Activated naive CD4-positive, alpha-beta T cell treated with anti-CD3 and anti-CD28 coated beads for 36 hours (primary cell): ENCODE measurements at regions of chr18 and their contacts with region 1.

Region 1: DNA sequence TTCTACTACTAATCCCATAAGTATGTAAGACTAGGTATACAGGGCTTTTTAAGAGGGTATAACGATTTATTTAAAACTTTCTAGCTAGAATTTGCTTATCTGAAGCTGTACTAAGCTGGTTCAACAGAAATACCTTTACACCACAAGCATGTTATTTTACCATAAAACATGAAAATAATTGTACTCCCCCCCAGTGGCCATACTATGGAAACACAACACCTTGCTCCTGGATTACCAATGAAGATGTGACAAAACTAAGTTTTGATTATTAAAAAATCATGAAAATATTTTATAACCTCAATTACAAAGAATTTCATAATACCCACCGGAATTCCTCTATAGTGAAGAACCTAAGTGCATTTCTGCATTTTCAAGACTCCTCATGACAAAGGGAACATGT is 27.3 kb downstream of the LPIN2 start:
- DNase-seq: no peak
- H3K4me3 Mint-ChIP-seq: no peak overlapping the region
- H3K27ac Mint-ChIP-seq: no peak overlapping the region
- H3K4me1 Mint-ChIP-seq: peaks cover 80% of the 10 kb centered on the region
- H3K27me3 Mint-ChIP-seq: no peaks in the 10 kb centered on the region

Region 2: DNA sequence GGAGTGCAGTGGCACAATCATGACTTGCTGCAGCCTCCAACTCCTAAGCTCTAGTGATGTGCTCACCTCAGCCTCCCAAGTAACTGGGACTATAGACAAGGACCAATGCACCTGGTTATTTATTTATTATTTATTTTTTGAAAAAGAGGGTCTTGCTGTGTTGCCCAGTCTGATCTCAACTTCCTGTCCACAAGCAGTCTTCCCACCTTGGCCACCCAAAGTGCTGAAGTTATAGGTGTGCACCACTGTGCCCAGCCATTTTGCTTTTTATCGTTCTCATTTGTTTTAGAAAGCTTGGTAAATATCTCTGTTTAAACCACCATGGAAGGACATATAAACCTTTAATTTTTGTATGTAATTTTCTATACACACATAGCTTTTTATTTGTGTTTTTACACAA is 255.9 kb before region 1 on chr18:
- CTCF ChIA-PET with region 1: no interaction called
- intact Hi-C with region 1: no loop called
- DNase-seq: no peak
- H3K4me3 Mint-ChIP-seq: no peak overlapping the region
- H3K27ac Mint-ChIP-seq: no peak overlapping the region
- H3K4me1 Mint-ChIP-seq: peaks cover 14% of the 10 kb centered on the region
- H3K27me3 Mint-ChIP-seq: no peaks in the 10 kb centered on the region

Region 3: GRCh38 chr18:2774669-2775068 is 211.0 kb before region 1 on chr18:
- CTCF ChIA-PET with region 1: no interaction called
- intact Hi-C with region 1: loop called (anchors 2 kb)
- DNase-seq: no peak
- H3K4me3 Mint-ChIP-seq: no peak overlapping the region
- H3K27ac Mint-ChIP-seq: no peak overlapping the region
- H3K4me1 Mint-ChIP-seq: peaks cover 6% of the 10 kb centered on the region
- H3K27me3 Mint-ChIP-seq: no peaks in the 10 kb centered on the region

Region 4: DNA sequence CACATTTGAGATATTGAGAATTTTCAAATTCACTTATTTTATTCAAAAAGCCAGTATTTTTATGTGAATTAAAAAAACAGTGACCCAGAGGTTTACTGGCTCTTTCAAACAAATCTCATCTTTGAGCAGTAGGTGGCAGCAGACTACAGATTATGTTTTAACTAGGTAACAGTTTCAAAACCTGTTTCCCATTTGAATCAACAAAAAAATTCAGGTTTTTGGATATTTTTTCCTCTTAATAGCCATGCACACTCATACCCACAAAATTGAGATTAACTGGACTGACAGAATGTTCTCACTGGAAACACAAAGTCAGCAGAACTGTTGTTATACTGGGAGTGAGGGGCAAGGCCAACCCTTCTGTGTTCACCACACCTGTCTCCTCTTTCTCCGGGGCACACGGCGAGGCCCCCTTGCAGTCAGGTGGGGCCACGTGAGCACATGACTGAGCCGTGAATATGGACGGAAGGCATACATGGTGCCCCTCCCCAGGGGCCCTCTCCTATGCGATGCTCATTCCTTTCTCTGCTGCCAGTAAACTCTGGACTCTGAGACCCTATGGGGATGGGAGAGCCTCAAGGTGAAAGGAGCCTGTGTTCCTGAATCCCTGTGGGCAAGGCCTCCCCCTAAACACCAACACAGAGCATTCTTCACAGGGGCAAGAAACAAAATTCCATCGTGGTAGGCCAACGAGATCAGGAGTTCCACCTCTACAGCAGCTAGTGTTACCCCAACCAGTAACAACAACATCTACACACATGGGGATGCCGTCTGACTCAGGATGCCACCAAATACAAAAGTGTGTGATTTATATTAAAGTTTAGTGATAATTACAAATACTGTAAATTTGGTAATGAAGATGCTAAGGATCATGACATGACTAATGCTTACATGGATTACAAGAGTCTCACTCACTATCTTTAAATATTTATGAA is 53.1 kb before region 1 on chr18:
- CTCF ChIA-PET with region 1: interaction called, 101 read pairs
- intact Hi-C with region 1: loop called (anchors 1 kb)
- DNase-seq: peak; percentile 68
- H3K4me3 Mint-ChIP-seq: no peak overlapping the region
- H3K27ac Mint-ChIP-seq: peak overlapping the region; percentile 94
- H3K4me1 Mint-ChIP-seq: peaks cover 35% of the 10 kb centered on the region
- H3K27me3 Mint-ChIP-seq: no peaks in the 10 kb centered on the region

Region 5: GRCh38 chr18:2958819-2959298 is 26.8 kb before region 1 on chr18:
- CTCF ChIA-PET with region 1: interaction called, 25 read pairs
- intact Hi-C with region 1: loop called (anchors 1 kb)
- DNase-seq: peak; percentile 44
- H3K4me3 Mint-ChIP-seq: peak overlapping the region; percentile 53
- H3K27ac Mint-ChIP-seq: peak overlapping the region; percentile 100
- H3K4me1 Mint-ChIP-seq: peaks cover 88% of the 10 kb centered on the region
- H3K27me3 Mint-ChIP-seq: no peaks in the 10 kb centered on the region

Region 6: GRCh38 chr18:3037423-3037915 is 51.8 kb after region 1 on chr18:
- CTCF ChIA-PET with region 1: no interaction called
- intact Hi-C with region 1: no loop called
- DNase-seq: no peak
- H3K4me3 Mint-ChIP-seq: no peak overlapping the region
- H3K27ac Mint-ChIP-seq: no peak overlapping the region
- H3K4me1 Mint-ChIP-seq: peaks cover 18% of the 10 kb centered on the region
- H3K27me3 Mint-ChIP-seq: no peaks in the 10 kb centered on the region

Region 7: GRCh38 chr18:3129053-3129864 is 143.6 kb after region 1 on chr18:
- CTCF ChIA-PET with region 1: interaction called, 28 read pairs
- intact Hi-C with region 1: no loop called
- DNase-seq: peak; percentile 92
- H3K4me3 Mint-ChIP-seq: no peak overlapping the region
- H3K27ac Mint-ChIP-seq: no peak overlapping the region
- H3K4me1 Mint-ChIP-seq: peaks cover 10% of the 10 kb centered on the region
- H3K27me3 Mint-ChIP-seq: no peaks in the 10 kb centered on the region

Region 8: DNA sequence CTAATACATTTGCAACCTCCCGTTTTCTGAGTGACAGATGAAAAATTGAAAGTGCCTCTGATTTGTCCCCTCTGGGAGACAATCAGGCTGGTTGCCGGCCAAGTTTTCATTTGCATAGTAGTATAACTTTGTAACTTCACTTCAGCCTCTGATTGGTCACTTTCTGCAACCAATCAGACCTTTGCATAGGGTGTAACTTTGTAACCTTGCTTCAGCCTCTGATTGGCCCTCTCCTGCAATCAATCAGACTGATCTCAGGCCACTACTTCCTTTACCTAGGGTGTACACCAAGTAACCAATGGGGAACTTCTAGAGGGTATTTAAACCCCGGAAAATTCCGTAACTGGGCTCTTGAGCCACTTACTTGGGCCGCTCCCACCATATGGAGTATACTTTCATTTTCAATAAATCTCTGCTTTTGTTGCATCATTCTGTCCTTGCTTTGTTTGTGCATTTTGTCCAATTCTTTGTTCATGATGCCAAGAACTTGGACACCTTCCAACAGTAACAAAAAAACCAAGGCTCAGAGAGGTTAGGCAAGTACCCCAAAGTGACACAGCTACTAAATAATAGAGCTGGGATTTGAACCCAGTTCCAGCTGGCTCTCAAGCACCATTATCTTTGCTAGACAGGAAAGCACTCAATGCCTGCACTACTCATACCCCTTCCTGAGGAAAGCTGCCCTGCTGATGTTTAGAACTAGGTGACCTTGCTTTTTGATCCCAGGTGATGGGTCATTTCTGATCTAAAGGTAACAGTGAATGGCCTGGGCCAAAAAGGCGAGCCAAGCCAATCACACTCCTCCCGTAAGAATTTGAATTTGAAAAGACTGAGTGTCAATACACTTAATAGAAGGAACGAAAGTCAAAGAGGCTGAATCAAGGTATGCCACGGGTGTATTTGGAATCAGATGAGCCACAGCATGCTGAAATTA is 245.0 kb after region 1 on chr18:
- CTCF ChIA-PET with region 1: no interaction called
- intact Hi-C with region 1: no loop called
- DNase-seq: no peak
- H3K4me3 Mint-ChIP-seq: no peak overlapping the region
- H3K27ac Mint-ChIP-seq: no peak overlapping the region
- H3K4me1 Mint-ChIP-seq: peaks cover 5% of the 10 kb centered on the region
- H3K27me3 Mint-ChIP-seq: no peaks in the 10 kb centered on the region

Region 9: DNA sequence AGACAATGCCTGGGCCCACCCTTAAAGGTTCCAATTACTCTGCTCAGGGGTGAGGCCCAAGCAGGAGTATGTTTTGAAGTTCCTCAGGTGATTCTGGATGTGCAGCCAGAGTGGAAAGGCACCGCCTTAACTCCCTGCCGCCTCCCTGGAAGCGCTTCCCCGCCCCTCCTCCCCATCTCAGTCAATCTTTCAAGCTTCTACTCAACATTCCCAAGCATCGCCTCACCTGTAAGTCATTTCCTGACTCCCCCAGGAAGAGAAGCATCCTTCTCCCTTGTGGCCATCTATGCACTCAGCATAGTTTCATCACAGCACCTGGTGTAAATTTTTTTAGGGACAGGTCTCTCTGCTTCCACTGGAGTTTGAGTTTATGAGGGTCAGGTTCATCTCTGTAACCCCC is 343.8 kb after region 1 on chr18:
- CTCF ChIA-PET with region 1: no interaction called
- intact Hi-C with region 1: no loop called
- DNase-seq: no peak
- H3K4me3 Mint-ChIP-seq: no peak overlapping the region
- H3K27ac Mint-ChIP-seq: no peak overlapping the region
- H3K4me1 Mint-ChIP-seq: no peaks in the 10 kb centered on the region
- H3K27me3 Mint-ChIP-seq: peaks cover 2% of the 10 kb centered on the region